BJ (cell line): ENCODE measurements at regions of chr7 and their contacts with region 1.

Region 1: GRCh38 chr7:76291343-76292212 is 10.9 kb upstream of the HSPB1 start:
- DNase-seq: peak; percentile 92
- H3K4me3 ChIP-seq: peak overlapping the region; percentile 14
- H3K27me3 ChIP-seq: no peaks in the 10 kb centered on the region
- CTCF ChIP-seq: peak; percentile 97

Region 2: DNA sequence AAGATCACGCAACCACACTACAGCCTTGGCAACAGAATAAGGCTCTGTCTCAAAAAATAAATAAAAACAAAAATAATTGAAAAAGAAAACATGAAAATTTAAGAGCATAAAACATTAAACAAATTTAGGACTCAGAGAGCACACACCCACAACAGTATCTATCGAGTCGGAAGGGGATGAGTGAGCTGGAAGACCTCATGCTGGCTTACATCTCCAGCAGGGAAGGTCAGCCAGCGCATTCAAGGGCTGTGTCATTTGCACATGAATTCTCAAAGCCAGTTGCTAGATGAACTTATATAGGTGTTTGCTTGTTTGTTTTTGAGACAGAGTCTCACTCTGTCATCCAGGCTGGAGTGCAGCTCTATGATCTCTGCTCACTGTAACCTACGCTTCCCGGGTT is 39.6 kb before region 1 on chr7:
- CTCF ChIA-PET with region 1: no interaction called
- POLR2A ChIA-PET with region 1: no interaction called
- DNase-seq: no peak
- H3K4me3 ChIP-seq: no peak overlapping the region
- H3K27me3 ChIP-seq: peaks cover 6% of the 10 kb centered on the region
- CTCF ChIP-seq: no peak

Region 3: DNA sequence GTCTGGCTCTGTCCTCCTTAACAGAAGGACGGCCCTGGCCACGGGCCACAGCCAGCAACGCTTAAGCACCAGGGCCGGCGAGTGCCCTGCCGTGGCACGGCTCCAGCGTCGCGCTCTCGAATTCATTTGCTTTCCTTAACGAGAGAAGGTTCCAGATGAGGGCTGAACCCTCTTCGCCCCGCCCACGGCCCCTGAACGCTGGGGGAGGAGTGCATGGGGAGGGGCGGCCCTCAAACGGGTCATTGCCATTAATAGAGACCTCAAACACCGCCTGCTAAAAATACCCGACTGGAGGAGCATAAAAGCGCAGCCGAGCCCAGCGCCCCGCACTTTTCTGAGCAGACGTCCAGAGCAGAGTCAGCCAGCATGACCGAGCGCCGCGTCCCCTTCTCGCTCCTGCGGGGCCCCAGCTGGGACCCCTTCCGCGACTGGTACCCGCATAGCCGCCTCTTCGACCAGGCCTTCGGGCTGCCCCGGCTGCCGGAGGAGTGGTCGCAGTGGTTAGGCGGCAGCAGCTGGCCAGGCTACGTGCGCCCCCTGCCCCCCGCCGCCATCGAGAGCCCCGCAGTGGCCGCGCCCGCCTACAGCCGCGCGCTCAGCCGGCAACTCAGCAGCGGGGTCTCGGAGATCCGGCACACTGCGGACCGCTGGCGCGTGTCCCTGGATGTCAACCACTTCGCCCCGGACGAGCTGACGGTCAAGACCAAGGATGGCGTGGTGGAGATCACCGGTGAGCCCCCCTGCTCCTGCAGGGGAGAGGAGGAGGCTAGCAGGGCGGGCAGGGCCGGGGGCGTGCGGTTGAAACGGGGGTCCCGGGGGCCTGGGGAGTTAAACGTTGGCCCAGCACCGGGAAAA is 11.0 kb after region 1 on chr7 and contains the start of gene HSPB1:
- CTCF ChIA-PET with region 1: interaction called, 49 read pairs
- POLR2A ChIA-PET with region 1: interaction called, 7 read pairs
- DNase-seq: peak; percentile 68
- H3K4me3 ChIP-seq: peak within 1 kb of the TSS; percentile 98
- H3K27me3 ChIP-seq: no peaks in the 10 kb centered on the region
- CTCF ChIP-seq: no peak
- polyA plus RNA-seq, gene HSPB1: 642 and 966 TPM in 2 replicates

Region 4: GRCh38 chr7:76333511-76334101 is 42.0 kb after region 1 on chr7:
- CTCF ChIA-PET with region 1: no interaction called
- POLR2A ChIA-PET with region 1: no interaction called
- DNase-seq: no peak
- H3K4me3 ChIP-seq: no peak overlapping the region
- H3K27me3 ChIP-seq: no peaks in the 10 kb centered on the region
- CTCF ChIP-seq: no peak

Region 5: GRCh38 chr7:76383089-76383944 is 91.7 kb after region 1 on chr7:
- CTCF ChIA-PET with region 1: no interaction called
- POLR2A ChIA-PET with region 1: no interaction called
- DNase-seq: no peak
- H3K4me3 ChIP-seq: no peak overlapping the region
- H3K27me3 ChIP-seq: no peaks in the 10 kb centered on the region
- CTCF ChIP-seq: no peak